Endothelial cell of umbilical vein (primary cell): ENCODE measurements at regions of chr9 and their contacts with region 1.

Region 1: DNA sequence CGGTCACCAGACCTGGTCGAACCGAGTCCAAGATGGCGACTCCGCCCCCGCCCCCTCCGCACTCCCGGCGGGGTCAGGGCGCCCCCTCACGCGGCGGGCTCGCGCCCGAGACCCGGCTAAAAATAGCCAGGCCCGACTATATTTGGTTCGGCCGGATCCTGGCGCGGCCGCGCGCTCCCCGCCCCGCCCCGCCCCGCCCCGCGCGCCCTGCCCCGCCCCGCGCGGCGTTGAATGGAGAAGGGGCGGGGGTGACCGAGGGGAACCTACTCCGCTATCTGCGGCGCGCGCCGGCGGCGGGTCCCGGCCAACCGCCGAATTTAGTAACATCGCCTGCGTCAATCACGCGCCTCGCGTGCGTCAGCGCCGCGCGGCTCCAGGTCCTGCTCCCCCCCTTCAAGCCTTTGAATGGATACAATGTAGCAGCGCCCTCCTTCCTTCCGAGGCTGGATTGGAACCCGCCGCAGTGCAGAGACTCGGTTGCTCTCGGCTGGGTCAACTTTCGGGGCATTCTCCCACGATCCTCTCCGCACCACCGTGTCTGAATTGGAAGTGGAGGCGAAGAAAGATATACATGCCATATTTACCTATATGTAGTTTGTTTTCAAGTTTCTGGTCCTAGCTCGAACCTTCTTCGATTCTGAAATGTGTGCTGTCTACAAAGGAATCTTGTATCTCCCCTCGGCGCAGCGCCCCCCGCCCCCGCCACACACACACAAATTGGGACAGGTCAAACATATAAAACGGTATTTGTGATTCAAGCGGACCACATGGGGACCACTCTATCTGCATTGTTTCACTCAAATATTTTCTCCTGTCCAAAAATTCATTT is 1.6 kb upstream of the NR4A3 start:
- DNase-seq: peak; percentile 93
- H3K4me3 ChIP-seq: peak overlapping the region; percentile 47 to 82 (median 78)
- H3K27ac ChIP-seq: peak overlapping the region; percentile 75
- H3K4me1 ChIP-seq: peaks cover 25% of the 10 kb centered on the region
- H3K27me3 ChIP-seq: peaks cover 8% of the 10 kb centered on the region in 2 experiments
- CTCF ChIP-seq: peak; percentile 4 to 9
- POLR2A ChIP-seq: no peak

Region 2: GRCh38 chr9:99184475-99185347 is 635.4 kb before region 1 on chr9:
- CTCF ChIA-PET with region 1: interaction called, 7 read pairs
- POLR2A ChIA-PET with region 1: interaction called, 3 read pairs
- dilution Hi-C with region 1: no loop called
- intact Hi-C with region 1: loop called (anchors 1 kb)
- DNase-seq: peak; percentile 99
- H3K4me3 ChIP-seq: peak overlapping the region in 2 of 3 experiments; percentile 20 to 25
- H3K27ac ChIP-seq: peak overlapping the region; percentile 88
- H3K4me1 ChIP-seq: peaks cover 10% of the 10 kb centered on the region
- H3K27me3 ChIP-seq: peaks cover 3 to 5% of the 10 kb centered on the region in 2 experiments
- CTCF ChIP-seq: peak; percentile 94 to 97
- POLR2A ChIP-seq: peak; percentile 50

Region 3: GRCh38 chr9:99340281-99340680 is 479.8 kb before region 1 on chr9:
- CTCF ChIA-PET with region 1: interaction called, 3 read pairs
- POLR2A ChIA-PET with region 1: no interaction called
- dilution Hi-C with region 1: no loop called
- intact Hi-C with region 1: loop called (anchors 1 kb)
- DNase-seq: peak; percentile 83
- H3K4me3 ChIP-seq: no peak overlapping the region
- H3K27ac ChIP-seq: peak overlapping the region; percentile 93
- H3K4me1 ChIP-seq: peaks cover 27% of the 10 kb centered on the region
- H3K27me3 ChIP-seq: no peaks in the 10 kb centered on the region
- CTCF ChIP-seq: no peak
- POLR2A ChIP-seq: peak; percentile 40

Region 4: GRCh38 chr9:99906403-99907207 is 86.5 kb after region 1 on chr9 and contains the start of gene STX17:
- CTCF ChIA-PET with region 1: interaction called, 3 read pairs
- POLR2A ChIA-PET with region 1: no interaction called
- dilution Hi-C with region 1: no loop called
- intact Hi-C with region 1: loop called (anchors 1 kb)
- DNase-seq: peak; percentile 77
- H3K4me3 ChIP-seq: peak within 1 kb of the TSS; percentile 68 to 90 (median 70)
- H3K27ac ChIP-seq: peak within 1 kb of the TSS; percentile 86
- H3K4me1 ChIP-seq: peaks cover 3% of the 10 kb centered on the region
- H3K27me3 ChIP-seq: no peaks in the 10 kb centered on the region
- CTCF ChIP-seq: no peak
- POLR2A ChIP-seq: peak; percentile 67
- total RNA-seq, gene STX17: 14.8 and 17.6 TPM in 2 replicates

Region 5: DNA sequence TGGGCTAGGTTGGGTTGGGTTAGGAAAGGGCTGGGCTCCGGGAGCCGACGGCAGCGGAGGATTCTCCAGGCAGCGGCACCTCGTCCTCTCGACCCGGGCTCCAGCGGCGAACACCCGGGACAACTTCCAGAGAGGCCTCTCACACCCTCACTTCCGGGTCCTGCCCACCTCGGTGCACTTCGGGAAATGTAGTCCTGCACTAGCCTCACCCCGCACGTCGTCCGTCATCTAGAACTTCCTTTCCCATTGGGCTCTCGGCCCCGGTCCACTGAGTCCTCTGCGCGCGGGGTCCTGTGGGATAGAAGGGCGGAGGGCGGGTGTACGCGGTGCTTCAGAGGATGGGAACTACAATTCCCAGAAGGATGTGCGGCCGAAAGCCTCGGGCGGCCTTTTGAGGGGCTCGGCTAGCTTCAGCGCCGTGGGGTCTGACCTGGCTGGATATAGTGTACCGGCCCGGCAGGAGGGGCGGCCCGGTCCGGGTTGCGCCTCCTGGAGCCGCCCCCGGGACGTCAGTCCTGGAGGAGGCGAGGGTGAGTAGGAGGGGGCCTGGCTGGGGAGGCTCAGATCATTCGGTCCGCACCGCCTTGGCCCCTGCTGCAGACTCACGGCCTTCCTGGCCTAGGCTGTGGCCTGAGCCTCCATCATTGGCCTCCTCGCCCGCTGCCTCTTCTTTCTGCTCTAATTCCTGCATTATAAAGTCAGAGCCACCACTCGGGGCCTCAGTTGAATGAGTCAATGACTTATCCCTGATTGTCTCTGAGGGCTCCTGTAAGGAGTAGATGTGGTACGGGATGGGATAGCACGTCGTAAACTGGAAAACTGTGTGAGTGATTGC is 279.0 kb after region 1 on chr9 and contains the starts of genes ERP44 and INVS:
- CTCF ChIA-PET with region 1: no interaction called
- POLR2A ChIA-PET with region 1: no interaction called
- dilution Hi-C with region 1: no loop called
- intact Hi-C with region 1: loop called (anchors 1 kb)
- DNase-seq: peak; percentile 99
- H3K4me3 ChIP-seq: peak within 1 kb of the TSS; percentile 63 to 85 (median 76)
- H3K27ac ChIP-seq: peak within 1 kb of the TSS; percentile 74
- H3K4me1 ChIP-seq: peaks cover 20% of the 10 kb centered on the region
- H3K27me3 ChIP-seq: no peaks in the 10 kb centered on the region
- CTCF ChIP-seq: no peak
- POLR2A ChIP-seq: peak; percentile 93
- total RNA-seq, gene ERP44: 19.3 and 21.4 TPM in 2 replicates
- total RNA-seq, gene INVS: 17.9 and 20.3 TPM in 2 replicates

Region 6: DNA sequence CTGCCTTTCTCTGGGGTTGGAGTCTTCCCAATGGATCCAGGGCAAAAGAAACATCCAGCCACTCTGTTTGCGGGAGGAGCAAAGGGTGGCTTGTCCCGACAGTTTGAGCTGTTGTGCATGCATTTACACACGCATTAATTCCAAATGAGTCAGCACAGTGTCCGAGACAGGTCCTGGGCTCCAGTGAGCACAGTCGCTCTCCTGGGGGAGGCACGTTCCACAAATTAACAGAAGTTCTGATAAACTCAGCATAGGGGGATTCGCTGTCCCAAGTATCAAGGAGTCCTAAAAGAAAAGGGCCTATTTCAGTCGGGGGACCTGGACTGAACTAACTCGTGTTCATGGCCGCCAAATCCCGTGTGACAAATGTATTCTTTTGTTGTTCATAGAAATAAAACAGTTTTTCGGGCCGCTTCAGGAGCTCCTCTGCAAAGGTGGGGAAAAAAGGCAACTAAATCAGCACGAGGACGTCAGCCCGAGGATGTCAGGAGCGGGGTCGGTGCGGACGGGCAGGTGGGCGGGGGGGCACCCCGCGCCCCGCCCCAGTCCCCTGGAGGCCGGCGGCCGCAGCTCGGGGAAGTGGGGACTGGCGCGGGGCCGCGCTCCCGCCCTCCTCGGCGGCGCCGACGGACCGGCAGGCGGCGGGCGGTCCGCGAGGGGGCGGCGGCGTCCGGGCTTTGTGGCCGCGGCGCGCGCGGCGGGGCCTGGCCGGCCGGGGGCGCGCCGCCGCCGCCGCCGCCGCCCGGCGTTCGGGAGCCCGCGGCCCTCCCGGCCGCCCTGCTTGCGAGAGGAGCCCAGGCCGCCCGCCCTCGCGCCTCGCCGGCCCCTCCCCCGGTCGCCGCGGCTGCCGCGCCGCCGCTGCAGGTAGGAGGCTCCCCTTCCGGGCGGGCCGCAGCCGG is 606.7 kb after region 1 on chr9 and contains the start of gene MSANTD3:
- CTCF ChIA-PET with region 1: no interaction called
- POLR2A ChIA-PET with region 1: no interaction called
- dilution Hi-C with region 1: no loop called
- intact Hi-C with region 1: loop called (anchors 2 kb)
- DNase-seq: peak; percentile 84
- H3K4me3 ChIP-seq: peak within 1 kb of the TSS; percentile 91 to 96 (median 94)
- H3K27ac ChIP-seq: peak within 1 kb of the TSS; percentile 98
- H3K4me1 ChIP-seq: peaks cover 36% of the 10 kb centered on the region
- H3K27me3 ChIP-seq: no peaks in the 10 kb centered on the region
- CTCF ChIP-seq: no peak
- POLR2A ChIP-seq: peak; percentile 59
- total RNA-seq, gene MSANTD3: 82.7 and 88.5 TPM in 2 replicates